HepG2 (cell line): ENCODE measurements at regions of chr14 and their contacts with region 1.

Region 1: GRCh38 chr14:38693423-38693822 is 409.6 kb downstream of the SEC23A start:
- DNase-seq: no peak
- ATAC-seq: peak; percentile 65
- H3K4me3 ChIP-seq: no peak overlapping the region
- H3K27ac ChIP-seq: no peak overlapping the region
- H3K4me1 ChIP-seq: no peaks in the 10 kb centered on the region
- H3K27me3 ChIP-seq: no peaks in the 10 kb centered on the region
- CTCF ChIP-seq: no peak
- EP300 ChIP-seq: no peak
- POLR2A ChIP-seq: no peak
- RAD21 ChIP-seq: no peak

Region 2: GRCh38 chr14:37172024-37172869 is 1521.2 kb before region 1 on chr14 and contains the start of gene SLC25A21:
- CTCF ChIA-PET with region 1: no interaction called
- POLR2A ChIA-PET with region 1: no interaction called
- in situ Hi-C with region 1: no loop called
- intact Hi-C with region 1: loop called (anchors 10 kb)
- DNase-seq: peak; percentile 85
- ATAC-seq: peak; percentile 96
- H3K4me3 ChIP-seq: peak within 1 kb of the TSS; percentile 64 to 83 (median 71)
- H3K27ac ChIP-seq: peak within 1 kb of the TSS; percentile 69
- H3K4me1 ChIP-seq: peaks cover 14% of the 10 kb centered on the region
- H3K27me3 ChIP-seq: peaks cover 0 to 12% of the 10 kb centered on the region in 2 experiments; a peak in 1 of 5 replicates
- CTCF ChIP-seq: peak; percentile 50
- EP300 ChIP-seq: peak; percentile 9 to 50; a peak in 3 of 4 replicates
- POLR2A ChIP-seq: peak; percentile 91 to 94
- RAD21 ChIP-seq: peak; percentile 60
- total RNA-seq, gene SLC25A21: 2.9 and 3.3 TPM in 2 replicates